CD8-positive, alpha-beta memory T cell (primary cell): ENCODE measurements at regions of chr19 and their contacts with region 1.

Region 1: GRCh38 chr19:1605236-1606137 is at the start of gene UQCR11:
- DNase-seq: peak; percentile 89 to 94 (median 90)
- H3K4me3 ChIP-seq: peak within 1 kb of the TSS; percentile 98
- H3K4me3 Mint-ChIP-seq: peak within 1 kb of the TSS; percentile 94 to 100 (median 99)
- H3K27ac ChIP-seq: peak within 1 kb of the TSS; percentile 79
- H3K27ac Mint-ChIP-seq: peak within 1 kb of the TSS; percentile 98 to 100 (median 100)
- H3K4me1 ChIP-seq: peaks cover 54% of the 10 kb centered on the region
- H3K4me1 Mint-ChIP-seq: peaks cover 42 to 72% (median 48%) of the 10 kb centered on the region in 3 donors
- H3K27me3 ChIP-seq: no peaks in the 10 kb centered on the region
- H3K27me3 Mint-ChIP-seq: peaks cover 0 to 4% of the 10 kb centered on the region in 2 donors
- total RNA-seq, gene UQCR11: 239 to 266 TPM

Region 2: GRCh38 chr19:1524292-1524971 is 81.1 kb before region 1 on chr19:
- CTCF ChIA-PET with region 1: no interaction called
- POLR2A ChIA-PET with region 1: no interaction called
- DNase-seq: no peak
- H3K4me3 ChIP-seq: no peak overlapping the region
- H3K4me3 Mint-ChIP-seq: peak overlapping the region in 5 of 7 donors; percentile 1 to 63 (median 40)
- H3K27ac ChIP-seq: no peak overlapping the region
- H3K27ac Mint-ChIP-seq: peak overlapping the region in 1 of 8 donors; percentile 10
- H3K4me1 ChIP-seq: no peaks in the 10 kb centered on the region
- H3K4me1 Mint-ChIP-seq: peaks cover 6 to 9% (median 6%) of the 10 kb centered on the region in 3 donors
- H3K27me3 ChIP-seq: peaks cover 8% of the 10 kb centered on the region
- H3K27me3 Mint-ChIP-seq: peaks cover 35 to 39% of the 10 kb centered on the region in 2 donors

Region 3: GRCh38 chr19:1592755-1593500 is 12.6 kb before region 1 on chr19 and contains the start of gene MBD3:
- CTCF ChIA-PET with region 1: interaction called, 4 read pairs
- POLR2A ChIA-PET with region 1: interaction called, 21 read pairs
- DNase-seq: peak; percentile 84 to 91 (median 86)
- H3K4me3 ChIP-seq: peak within 1 kb of the TSS; percentile 87
- H3K4me3 Mint-ChIP-seq: peak within 1 kb of the TSS; percentile 86 to 94 (median 89)
- H3K27ac ChIP-seq: peak within 1 kb of the TSS; percentile 80
- H3K27ac Mint-ChIP-seq: peak within 1 kb of the TSS; percentile 80 to 96 (median 90)
- H3K4me1 ChIP-seq: peaks cover 13% of the 10 kb centered on the region
- H3K4me1 Mint-ChIP-seq: peaks cover 14 to 20% (median 15%) of the 10 kb centered on the region in 3 donors
- H3K27me3 ChIP-seq: no peaks in the 10 kb centered on the region
- H3K27me3 Mint-ChIP-seq: no peaks in the 10 kb centered on the region
- total RNA-seq, gene MBD3: 127 to 138 TPM

Region 4: DNA sequence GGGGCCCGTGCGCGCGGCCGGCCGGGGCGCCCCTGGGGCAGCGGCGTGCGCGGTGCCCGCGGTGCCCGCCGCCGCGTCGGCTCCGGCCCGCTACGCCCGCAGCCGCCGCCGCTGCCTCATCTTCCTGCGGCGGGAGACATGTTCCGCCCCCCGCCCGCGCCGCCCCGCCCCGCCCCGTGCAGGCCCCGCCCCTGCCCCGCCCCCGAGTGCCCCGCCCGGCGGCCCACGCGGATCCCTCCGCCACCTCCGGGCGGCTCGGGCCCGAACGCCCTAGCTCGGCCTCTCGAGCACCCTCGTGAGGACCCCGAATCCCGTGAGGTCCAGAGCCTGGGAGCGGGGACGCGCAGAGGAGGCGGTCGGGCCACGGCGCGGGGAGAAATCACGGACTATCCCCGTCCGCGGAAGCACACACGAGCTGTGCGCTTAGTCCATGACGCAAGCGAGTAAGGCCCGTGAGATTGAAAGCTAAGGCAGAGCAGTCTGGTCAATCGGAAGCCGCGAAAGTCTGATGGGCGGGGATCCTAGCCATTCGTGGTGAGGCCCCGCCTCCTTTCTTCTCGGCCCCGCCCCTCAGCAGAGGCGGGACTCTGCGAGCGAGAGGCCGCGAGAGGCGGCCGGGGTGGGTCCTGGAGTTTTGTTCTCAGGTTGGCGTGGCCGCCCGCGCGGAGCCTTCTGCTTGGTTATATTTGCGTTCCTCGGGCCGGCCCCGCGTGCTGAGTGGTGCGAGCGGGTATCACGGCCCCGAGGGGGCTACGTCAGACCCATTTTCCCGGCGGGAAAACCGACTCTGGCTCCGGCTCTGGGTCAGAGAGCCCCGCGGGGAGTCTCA is 47.2 kb after region 1 on chr19 and contains the start of gene TCF3:
- CTCF ChIA-PET with region 1: interaction called, 29 read pairs
- POLR2A ChIA-PET with region 1: interaction called, 29 read pairs
- DNase-seq: peak; percentile 96 to 100 (median 99)
- H3K4me3 ChIP-seq: peak within 1 kb of the TSS; percentile 83
- H3K4me3 Mint-ChIP-seq: peak within 1 kb of the TSS; percentile 82 to 99 (median 93)
- H3K27ac ChIP-seq: peak within 1 kb of the TSS; percentile 98
- H3K27ac Mint-ChIP-seq: peak within 1 kb of the TSS; percentile 93 to 98 (median 98)
- H3K4me1 ChIP-seq: peaks cover 13% of the 10 kb centered on the region
- H3K4me1 Mint-ChIP-seq: peaks cover 17 to 27% (median 18%) of the 10 kb centered on the region in 3 donors
- H3K27me3 ChIP-seq: no peaks in the 10 kb centered on the region
- H3K27me3 Mint-ChIP-seq: peaks cover 6 to 10% of the 10 kb centered on the region in 2 donors
- total RNA-seq, gene TCF3: 96.0 to 97.0 TPM

Region 5: DNA sequence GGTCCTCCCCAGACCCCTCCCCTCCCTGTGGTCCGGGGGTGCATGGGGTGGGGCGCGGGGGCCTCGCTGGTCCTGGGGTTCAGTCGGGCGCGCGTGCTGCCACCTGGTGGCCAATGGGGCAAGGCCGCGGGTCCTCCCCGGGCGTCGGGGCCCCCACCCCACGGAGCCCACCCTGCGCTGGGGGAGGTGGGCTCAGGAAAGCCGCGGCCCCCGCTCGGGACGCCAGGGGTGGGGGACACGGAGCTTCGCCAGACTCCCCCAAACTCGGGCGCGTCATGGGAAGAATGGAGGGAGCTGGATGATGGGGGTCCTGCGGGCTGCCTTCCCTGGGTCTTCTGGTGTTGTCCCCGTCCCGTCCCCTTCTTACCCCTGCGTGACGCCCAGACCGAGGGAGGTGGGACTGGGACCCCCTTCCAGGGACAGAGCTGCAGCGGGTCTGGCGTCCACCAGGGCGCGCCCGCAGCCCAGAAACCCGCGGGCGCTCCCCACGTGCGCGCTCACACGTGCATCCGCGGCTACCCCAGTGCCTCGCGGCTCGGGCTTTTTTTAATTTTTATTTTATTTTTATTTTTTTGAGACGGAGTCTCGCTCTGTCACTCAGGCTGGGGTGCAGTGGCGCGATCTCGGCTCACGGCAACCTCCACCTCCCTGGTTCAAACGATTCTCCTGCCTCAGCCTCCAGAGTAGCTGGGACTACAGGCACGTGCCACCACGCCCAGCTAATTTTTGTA is 66.7 kb after region 1 on chr19:
- CTCF ChIA-PET with region 1: interaction called, 23 read pairs
- POLR2A ChIA-PET with region 1: interaction called, 5 read pairs
- DNase-seq: peak; percentile 32 to 73 (median 43)
- H3K4me3 ChIP-seq: no peak overlapping the region
- H3K4me3 Mint-ChIP-seq: peak overlapping the region in 2 of 7 donors; percentile 2 to 78
- H3K27ac ChIP-seq: peak overlapping the region; percentile 54
- H3K27ac Mint-ChIP-seq: no peak overlapping the region
- H3K4me1 ChIP-seq: peaks cover 9% of the 10 kb centered on the region
- H3K4me1 Mint-ChIP-seq: peaks cover 12 to 18% (median 16%) of the 10 kb centered on the region in 3 donors
- H3K27me3 ChIP-seq: peaks cover 51% of the 10 kb centered on the region
- H3K27me3 Mint-ChIP-seq: peaks cover 38 to 56% of the 10 kb centered on the region in 2 donors